Calu3 (cell line): ENCODE measurements at regions of chr7 and their contacts with region 1.

Region 1: DNA sequence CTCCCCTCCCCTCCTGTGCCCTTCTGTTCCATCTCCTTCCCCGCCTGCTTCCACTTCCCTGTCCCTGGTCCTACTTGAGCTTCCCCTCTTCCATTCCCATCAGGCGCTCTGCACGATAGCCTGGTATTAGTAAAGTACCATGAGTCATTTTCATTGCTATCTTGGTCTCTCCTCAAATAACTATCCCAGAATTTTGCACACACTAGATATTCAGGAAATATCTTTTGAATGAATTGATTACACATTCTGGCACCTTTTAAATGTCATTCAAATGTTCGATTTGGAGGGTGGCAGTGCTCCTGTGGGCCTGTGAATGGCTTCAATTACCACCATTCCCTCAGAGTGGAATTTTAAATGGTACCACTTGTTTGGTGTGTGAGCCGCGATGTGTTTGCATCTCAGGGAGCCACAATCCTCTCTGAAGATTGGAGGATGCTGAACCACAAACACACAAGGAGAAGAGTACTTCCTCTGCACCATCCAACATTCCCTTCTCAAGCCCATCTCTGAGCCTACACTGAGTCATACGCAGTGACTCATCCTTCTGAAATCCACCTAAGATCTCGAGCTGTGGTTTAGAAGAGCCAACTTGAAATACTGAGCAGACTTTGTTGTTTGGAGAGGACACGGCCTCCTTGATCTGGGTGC is 81.7 kb downstream of the BMPER start:
- DNase-seq: peak; percentile 75
- H3K4me3 Mint-ChIP-seq: no peak overlapping the region
- H3K27ac Mint-ChIP-seq: peak overlapping the region; percentile 32
- H3K4me1 Mint-ChIP-seq: peaks cover 23% of the 10 kb centered on the region
- H3K27me3 Mint-ChIP-seq: peaks cover under 1% of the 10 kb centered on the region
- CTCF ChIP-seq: no peak

Region 2: GRCh38 chr7:33692956-33693355 is 294.1 kb before region 1 on chr7:
- CTCF ChIA-PET with region 1: no interaction called
- intact Hi-C with region 1: no loop called
- DNase-seq: no peak
- H3K4me3 Mint-ChIP-seq: no peak overlapping the region
- H3K27ac Mint-ChIP-seq: no peak overlapping the region
- H3K4me1 Mint-ChIP-seq: peaks cover 2% of the 10 kb centered on the region
- H3K27me3 Mint-ChIP-seq: peaks cover 13% of the 10 kb centered on the region
- CTCF ChIP-seq: no peak

Region 3: GRCh38 chr7:34165929-34166550 is 179.0 kb after region 1 on chr7:
- CTCF ChIA-PET with region 1: interaction called, 5 read pairs
- intact Hi-C with region 1: loop called (anchors 1 kb)
- DNase-seq: peak; percentile 22
- H3K4me3 Mint-ChIP-seq: no peak overlapping the region
- H3K27ac Mint-ChIP-seq: no peak overlapping the region
- H3K4me1 Mint-ChIP-seq: no peaks in the 10 kb centered on the region
- H3K27me3 Mint-ChIP-seq: peaks cover 36% of the 10 kb centered on the region
- CTCF ChIP-seq: peak; percentile 50